ENCODE measurements at regions of chr2 and their contacts with region 1.

Region 1: GRCh38 chr2:97697252-97698235 is 15.8 kb upstream of the ZAP70 start:
- DNase-seq: peak; percentile 94
- ATAC-seq: peak; percentile 95
- H3K4me3 Mint-ChIP-seq: peak overlapping the region; percentile 13
- H3K27ac Mint-ChIP-seq: peak overlapping the region; percentile 7
- H3K4me1 Mint-ChIP-seq: peaks cover 11% of the 10 kb centered on the region
- H3K27me3 Mint-ChIP-seq: peaks cover 4% of the 10 kb centered on the region

Region 2: DNA sequence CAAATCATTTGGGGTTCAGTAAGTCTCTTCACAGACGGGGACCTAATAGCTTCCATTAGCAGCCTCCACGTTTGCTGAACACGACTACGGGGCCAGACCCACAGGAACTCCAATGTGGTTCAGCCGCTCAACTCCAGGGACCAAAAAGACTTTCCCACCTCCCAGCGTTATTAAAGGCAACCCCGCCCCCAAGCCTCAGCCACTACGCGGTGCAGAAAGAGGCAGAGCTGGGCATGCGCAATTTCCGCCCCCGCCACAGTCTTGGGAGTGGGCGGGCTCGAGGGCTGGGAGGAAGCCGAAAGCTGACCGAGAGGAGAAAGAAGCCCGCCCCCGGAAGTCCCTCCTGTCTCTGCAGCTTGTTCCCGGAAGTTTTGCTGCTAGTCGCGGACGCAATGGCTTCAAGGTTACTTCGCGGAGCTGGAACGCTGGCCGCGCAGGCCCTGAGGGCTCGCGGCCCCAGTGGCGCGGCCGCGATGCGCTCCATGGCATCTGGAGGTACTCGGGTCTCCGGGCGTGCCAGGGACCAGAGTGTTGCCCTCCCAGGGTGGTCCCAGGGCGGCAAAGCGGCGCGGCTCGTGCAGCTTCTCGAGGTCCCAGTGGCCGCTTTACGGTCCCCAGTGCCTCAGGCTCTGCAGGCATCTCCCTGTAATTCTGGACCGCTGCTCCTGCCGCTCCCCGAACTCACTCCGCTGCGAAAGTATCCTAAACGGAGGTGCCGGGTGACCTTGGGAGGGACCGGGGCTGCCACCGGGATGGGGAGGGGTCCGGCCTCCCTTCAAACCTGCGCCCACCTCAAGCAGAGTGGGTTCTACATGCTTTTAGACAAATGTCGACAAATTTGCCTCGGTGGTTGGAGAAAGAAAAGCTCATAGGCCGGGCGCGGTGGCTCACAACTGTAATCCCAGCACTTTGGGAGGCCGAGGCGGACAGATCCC is 51.6 kb before region 1 on chr2 and contains the start of gene COX5B:
- CTCF ChIA-PET with region 1: interaction called, 22 read pairs
- DNase-seq: peak; percentile 99
- ATAC-seq: peak; percentile 98
- H3K4me3 Mint-ChIP-seq: peak within 1 kb of the TSS; percentile 77
- H3K27ac Mint-ChIP-seq: peak within 1 kb of the TSS; percentile 93
- H3K4me1 Mint-ChIP-seq: peaks cover 27% of the 10 kb centered on the region
- H3K27me3 Mint-ChIP-seq: peaks cover 3% of the 10 kb centered on the region
- total RNA-seq, gene COX5B: 206 to 236 TPM

Region 3: DNA sequence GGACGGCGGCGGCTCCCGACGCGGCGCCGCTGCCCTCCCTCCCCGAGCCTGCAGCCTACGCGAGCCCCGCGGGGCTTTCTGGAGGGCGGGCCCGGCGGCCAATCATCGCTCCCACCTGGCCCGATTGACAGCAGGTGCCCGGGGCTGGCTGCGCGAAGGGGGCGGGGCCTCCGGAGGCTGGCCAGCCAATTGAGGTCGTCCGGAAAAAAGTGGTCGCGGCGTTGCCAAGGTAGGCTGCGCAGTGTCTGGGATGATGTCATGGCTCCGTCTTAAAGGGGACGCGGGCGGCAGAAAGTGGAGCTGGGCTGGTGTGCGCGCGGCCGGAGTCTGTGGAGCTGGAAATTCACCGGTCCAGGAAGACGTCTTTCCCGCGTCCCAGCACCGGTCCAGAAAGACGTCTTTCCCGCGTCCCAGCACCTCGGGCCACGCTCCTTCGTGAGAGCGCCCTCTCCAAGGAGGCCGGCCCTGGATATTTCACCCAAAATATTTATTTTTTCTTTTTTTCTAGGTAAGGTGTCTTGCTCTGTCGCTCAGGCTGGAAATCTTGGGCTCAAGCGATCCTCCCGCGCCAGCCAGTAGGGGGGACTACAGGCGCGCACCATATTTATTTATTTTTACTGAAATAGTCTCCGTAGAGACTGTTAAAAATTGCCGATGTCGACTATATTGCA is 33.4 kb before region 1 on chr2 and contains the start of gene ACTR1B:
- CTCF ChIA-PET with region 1: interaction called, 88 read pairs
- DNase-seq: peak; percentile 99
- ATAC-seq: peak; percentile 88
- H3K4me3 Mint-ChIP-seq: peak within 1 kb of the TSS; percentile 91
- H3K27ac Mint-ChIP-seq: peak within 1 kb of the TSS; percentile 99
- H3K4me1 Mint-ChIP-seq: peaks cover 34% of the 10 kb centered on the region
- H3K27me3 Mint-ChIP-seq: no peaks in the 10 kb centered on the region
- total RNA-seq, gene ACTR1B: 87.4 to 94.3 TPM

Region 4: DNA sequence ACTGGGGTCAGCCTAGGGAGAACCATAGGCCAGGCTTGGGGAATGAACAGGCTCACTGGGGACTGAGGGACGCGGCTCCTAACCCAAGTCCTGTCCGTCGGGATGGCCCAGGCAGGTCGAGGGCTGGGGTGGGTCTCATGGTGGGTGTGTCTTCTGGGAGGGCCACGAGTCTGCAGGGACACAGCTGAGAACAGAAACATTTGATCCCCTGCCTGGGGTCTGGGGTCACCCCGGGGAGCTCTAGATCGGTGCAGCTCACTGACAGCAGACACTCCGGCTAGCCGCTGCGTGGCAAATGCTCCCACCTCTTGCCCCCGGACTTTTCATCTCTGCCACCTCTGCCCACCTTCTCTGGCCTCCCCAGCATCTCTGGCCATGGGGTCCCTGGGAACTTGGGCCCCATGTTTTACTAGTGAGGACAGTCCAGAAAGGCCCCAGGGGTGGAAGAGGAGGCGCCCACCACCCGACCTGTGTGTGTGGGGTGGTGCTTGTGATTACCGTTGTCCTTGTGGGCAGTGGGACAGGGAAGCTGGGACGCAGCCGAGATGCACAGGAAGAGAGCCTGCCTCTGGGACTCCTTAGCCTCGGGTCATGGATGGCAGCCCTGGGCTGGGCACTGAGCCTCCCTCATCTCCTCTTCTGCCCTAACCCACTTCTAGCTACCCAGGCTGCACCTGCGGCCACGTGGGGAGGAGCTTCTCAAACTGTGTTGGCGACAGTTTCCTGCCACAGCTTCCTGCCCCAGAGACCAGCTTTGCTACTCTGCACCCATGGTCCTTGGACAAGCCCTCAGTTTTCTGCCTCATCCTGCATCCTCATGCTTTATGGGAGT is 20.7 kb after region 1 on chr2:
- CTCF ChIA-PET with region 1: interaction called, 211 read pairs
- DNase-seq: peak; percentile 94
- ATAC-seq: peak; percentile 76
- H3K4me3 Mint-ChIP-seq: peak overlapping the region; percentile 83
- H3K27ac Mint-ChIP-seq: peak overlapping the region; percentile 100
- H3K4me1 Mint-ChIP-seq: peaks cover 75% of the 10 kb centered on the region
- H3K27me3 Mint-ChIP-seq: no peaks in the 10 kb centered on the region

Region 5: DNA sequence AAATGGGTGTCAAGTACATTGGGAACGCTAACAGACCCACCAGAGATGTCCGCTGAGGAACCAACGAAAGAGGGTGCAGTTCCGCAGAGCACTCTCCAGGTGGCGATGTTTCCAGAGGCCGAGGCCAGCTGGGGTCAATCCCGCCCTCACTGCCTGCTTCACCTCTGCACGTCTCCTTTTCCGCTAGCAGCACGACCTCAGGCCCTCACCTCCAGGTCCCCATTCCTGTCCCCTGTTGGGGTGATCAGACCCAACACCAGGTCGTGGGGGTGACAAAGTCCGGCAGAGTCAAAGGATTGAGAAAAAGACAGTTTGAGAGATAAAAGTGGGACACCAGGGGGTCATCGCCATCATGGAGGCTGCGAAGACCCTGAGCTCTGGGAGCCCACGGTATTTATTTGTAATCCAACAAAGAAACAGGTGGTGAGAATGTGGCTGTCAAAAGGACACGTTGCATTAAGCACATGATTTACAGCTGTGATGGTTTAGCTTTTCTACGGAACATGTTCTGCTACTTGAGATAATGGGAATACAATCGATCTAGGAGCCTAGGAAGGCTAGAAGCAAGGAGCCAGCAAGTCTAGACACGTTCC is 43.1 kb after region 1 on chr2:
- CTCF ChIA-PET with region 1: interaction called, 621 read pairs
- DNase-seq: peak; percentile 57
- ATAC-seq: no peak
- H3K4me3 Mint-ChIP-seq: no peak overlapping the region
- H3K27ac Mint-ChIP-seq: peak overlapping the region; percentile 97
- H3K4me1 Mint-ChIP-seq: peaks cover 56% of the 10 kb centered on the region
- H3K27me3 Mint-ChIP-seq: no peaks in the 10 kb centered on the region

Region 6: DNA sequence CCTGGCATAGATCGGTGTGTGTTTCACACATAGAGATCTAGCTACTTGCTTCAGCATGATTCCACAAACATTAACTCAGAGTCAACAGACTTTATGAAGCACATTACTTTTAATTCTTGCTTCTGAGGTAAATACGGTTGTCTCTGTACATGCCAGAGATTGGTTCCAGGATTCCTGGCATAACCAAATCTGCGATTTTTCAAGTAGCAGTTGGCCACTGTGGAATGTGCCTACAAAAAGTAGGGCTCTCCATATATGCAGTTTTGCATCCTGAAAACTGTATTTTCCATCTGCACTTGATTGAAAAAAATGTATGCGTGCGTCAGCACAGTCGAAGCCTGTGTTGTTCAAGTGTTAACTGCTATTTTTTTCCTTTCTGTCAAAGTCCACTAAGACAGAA is 100.9 kb after region 1 on chr2:
- CTCF ChIA-PET with region 1: no interaction called
- DNase-seq: no peak
- ATAC-seq: no peak
- H3K4me3 Mint-ChIP-seq: no peak overlapping the region
- H3K27ac Mint-ChIP-seq: no peak overlapping the region
- H3K4me1 Mint-ChIP-seq: no peaks in the 10 kb centered on the region
- H3K27me3 Mint-ChIP-seq: no peaks in the 10 kb centered on the region

Region 7: DNA sequence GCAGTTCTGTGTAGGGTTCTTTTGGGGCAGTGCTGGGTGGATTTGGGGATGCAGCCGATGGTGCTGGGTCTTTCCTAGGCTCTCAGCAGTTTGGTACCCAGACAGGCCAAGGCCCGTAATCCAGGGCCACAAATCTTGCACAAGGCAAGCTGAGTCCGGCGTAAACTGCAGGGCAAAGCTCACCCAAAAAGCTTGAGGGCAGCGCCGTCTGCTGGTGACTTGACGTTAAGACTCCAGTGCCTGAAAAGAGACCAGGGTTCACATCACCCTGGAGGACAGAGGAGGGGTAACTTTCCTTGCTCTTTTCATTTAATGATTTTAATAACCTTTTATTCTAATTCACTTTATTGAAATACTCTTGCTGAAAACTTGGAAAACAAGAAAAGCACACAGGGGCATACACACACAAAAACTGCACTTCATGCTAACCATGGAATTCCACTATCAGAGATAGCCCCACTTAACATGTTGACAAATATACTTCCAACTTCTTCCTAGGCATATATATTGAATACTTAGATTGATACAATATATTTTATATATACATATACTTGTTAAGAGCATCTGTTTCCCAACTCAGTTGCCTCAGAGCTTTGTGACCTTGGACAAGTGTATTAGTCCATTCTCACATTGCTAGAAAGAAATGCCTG is 687.6 kb after region 1 on chr2:
- CTCF ChIA-PET with region 1: interaction called, 18 read pairs
- DNase-seq: peak; percentile 82
- ATAC-seq: peak; percentile 93
- H3K4me3 Mint-ChIP-seq: no peak overlapping the region
- H3K27ac Mint-ChIP-seq: no peak overlapping the region
- H3K4me1 Mint-ChIP-seq: peaks cover 2% of the 10 kb centered on the region
- H3K27me3 Mint-ChIP-seq: peaks cover 28% of the 10 kb centered on the region

Measured in activated CD8-positive, alpha-beta memory T cell treated with anti-CD3 and anti-CD28 coated beads, Interleukin-2, amount 10 ng/mL, durations not matched to agents 7 days and 5 days (primary cell).